Right cardiac atrium (tissue), 5 donors: ENCODE measurements at regions of chr2 and their contacts with region 1.

Region 1: GRCh38 chr2:24382363-24383073 is 22.2 kb upstream of the ITSN2 start:
- DNase-seq: peak; percentile 32 to 75 (median 65)
- ATAC-seq: peak; percentile 90 to 93
- H3K4me3 ChIP-seq: no peak overlapping the region
- H3K27ac ChIP-seq: no peak overlapping the region
- H3K4me1 ChIP-seq: no peaks in the 10 kb centered on the region
- H3K27me3 ChIP-seq: no peaks in the 10 kb centered on the region

Region 2: DNA sequence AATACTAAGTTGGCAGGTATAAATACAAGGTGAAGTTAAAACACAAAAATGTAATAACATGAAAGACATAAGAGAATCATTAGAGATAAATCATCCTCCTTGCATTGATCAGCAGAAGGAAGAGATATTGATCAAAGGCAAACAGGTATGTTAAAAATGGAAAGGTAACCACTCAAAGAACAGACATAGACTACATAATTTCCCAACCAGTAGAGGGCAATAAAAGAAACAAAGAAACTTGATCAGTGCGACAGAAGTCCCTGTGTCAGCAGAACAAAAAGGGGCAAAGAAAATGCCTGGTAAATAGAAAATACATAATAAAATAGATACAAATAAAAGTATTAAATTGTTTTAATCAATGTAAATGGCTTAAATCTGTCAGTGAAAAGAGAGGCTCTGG is 154.0 kb before region 1 on chr2:
- intact Hi-C with region 1: loop called in 2 of 4 experiments (anchors 5 kb)
- DNase-seq: no peak
- ATAC-seq: no peak
- H3K4me3 ChIP-seq: no peak overlapping the region
- H3K27ac ChIP-seq: no peak overlapping the region
- H3K4me1 ChIP-seq: no peaks in the 10 kb centered on the region
- H3K27me3 ChIP-seq: no peaks in the 10 kb centered on the region

Region 3: DNA sequence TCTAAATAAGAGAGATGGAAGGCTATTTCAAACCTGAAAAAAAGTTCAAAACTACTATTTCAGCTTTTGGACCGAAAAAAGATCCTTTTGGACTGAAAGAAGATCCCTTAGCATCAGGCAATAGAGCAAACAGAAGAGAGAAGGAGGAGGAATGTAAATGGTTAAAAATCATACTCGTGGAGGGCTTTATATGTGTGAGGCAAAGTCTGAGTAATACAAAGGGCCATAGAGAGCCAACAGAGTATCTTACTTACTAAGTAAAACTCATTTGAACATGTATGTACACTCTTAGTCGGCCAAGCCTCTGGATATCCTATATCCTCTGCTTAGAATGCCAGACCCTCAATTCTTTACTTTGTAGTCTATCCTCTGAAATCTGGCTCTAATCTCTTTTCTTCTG is 77.9 kb before region 1 on chr2:
- intact Hi-C with region 1: loop called in 1 of 4 experiments (anchors 5 kb)
- DNase-seq: no peak
- ATAC-seq: peak; percentile 23 to 25
- H3K4me3 ChIP-seq: no peak overlapping the region
- H3K27ac ChIP-seq: no peak overlapping the region
- H3K4me1 ChIP-seq: peaks cover 2% of the 10 kb centered on the region
- H3K27me3 ChIP-seq: no peaks in the 10 kb centered on the region